ENCODE measurements at regions of chr22 and their contacts with region 1.

Region 1: DNA sequence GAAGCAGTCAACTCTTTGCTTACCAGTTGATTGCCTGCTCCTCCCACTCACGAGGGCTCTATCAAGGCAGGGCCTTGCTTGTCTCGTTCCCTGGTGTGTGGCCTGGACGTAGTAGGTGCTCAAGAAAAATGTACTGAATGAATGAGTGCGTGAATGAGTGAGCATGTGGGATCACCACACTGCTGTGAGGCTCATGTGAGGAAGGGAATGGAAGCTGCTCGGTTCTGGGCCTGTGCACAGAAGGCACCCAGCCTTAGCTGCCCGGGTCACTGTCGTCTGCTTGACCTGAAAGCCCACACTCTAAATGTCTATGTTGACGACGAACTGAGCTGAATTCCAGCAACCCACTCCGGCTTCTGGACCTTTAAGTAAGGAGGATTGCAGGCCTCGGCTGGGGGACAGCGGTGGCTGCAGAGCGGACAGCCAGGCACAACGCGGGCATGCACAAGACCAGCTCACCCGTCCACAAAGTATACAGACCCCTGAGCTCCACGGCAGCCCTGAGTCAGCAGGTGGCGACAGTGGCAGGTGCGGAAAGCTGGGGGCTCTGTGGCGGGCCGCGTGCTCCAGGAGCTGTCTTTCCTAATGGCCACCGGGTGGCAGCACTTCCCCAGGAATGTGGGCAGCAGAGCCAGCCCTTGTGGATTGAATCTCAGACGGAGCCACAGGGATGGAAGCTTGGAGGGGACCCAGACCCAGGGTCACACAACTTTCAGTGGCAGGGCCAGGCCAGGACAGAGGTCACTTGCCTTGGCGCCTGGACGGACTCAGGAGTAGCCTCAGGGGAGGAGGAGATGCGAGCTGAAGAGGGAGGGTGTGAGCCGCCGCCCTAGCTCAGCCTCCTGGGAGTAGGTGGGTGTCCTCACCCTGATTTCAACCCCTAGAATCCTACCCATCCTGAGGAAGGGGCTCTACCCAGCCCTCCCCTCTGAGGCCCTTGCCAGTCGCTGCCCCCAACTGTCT is 5.0 kb upstream of the PICK1 start:
- DNase-seq: peak; percentile 59 to 90 (median 70)
- ATAC-seq: peak; percentile 74
- H3K4me3 ChIP-seq: no peak overlapping the region
- H3K4me3 Mint-ChIP-seq: no peak overlapping the region
- H3K27ac ChIP-seq: no peak overlapping the region
- H3K27ac Mint-ChIP-seq: no peak overlapping the region
- H3K4me1 ChIP-seq: peaks cover 21% of the 10 kb centered on the region
- H3K4me1 Mint-ChIP-seq: peaks cover 7% of the 10 kb centered on the region
- H3K27me3 ChIP-seq: no peaks in the 10 kb centered on the region
- H3K27me3 Mint-ChIP-seq: peaks cover 12% of the 10 kb centered on the region
- CTCF ChIP-seq: peak; percentile 78

Region 2: GRCh38 chr22:37849089-37849751 is 203.0 kb before region 1 on chr22 and contains the start of gene EIF3L:
- CTCF ChIA-PET with region 1: no interaction called
- POLR2A ChIA-PET with region 1: no interaction called
- intact Hi-C with region 1: loop called in 1 of 2 experiments (anchors 10 kb)
- DNase-seq: peak; percentile 77 to 92 (median 84)
- ATAC-seq: peak; percentile 63
- H3K4me3 ChIP-seq: peak within 1 kb of the TSS; percentile 83
- H3K4me3 Mint-ChIP-seq: peak within 1 kb of the TSS; percentile 90
- H3K27ac ChIP-seq: peak within 1 kb of the TSS; percentile 78 to 89
- H3K27ac Mint-ChIP-seq: peak within 1 kb of the TSS; percentile 97
- H3K4me1 ChIP-seq: peaks cover 31% of the 10 kb centered on the region
- H3K4me1 Mint-ChIP-seq: peaks cover 51% of the 10 kb centered on the region
- H3K27me3 ChIP-seq: no peaks in the 10 kb centered on the region
- H3K27me3 Mint-ChIP-seq: no peaks in the 10 kb centered on the region
- CTCF ChIP-seq: no peak
- total RNA-seq, gene EIF3L: 525 to 541 TPM

Region 3: DNA sequence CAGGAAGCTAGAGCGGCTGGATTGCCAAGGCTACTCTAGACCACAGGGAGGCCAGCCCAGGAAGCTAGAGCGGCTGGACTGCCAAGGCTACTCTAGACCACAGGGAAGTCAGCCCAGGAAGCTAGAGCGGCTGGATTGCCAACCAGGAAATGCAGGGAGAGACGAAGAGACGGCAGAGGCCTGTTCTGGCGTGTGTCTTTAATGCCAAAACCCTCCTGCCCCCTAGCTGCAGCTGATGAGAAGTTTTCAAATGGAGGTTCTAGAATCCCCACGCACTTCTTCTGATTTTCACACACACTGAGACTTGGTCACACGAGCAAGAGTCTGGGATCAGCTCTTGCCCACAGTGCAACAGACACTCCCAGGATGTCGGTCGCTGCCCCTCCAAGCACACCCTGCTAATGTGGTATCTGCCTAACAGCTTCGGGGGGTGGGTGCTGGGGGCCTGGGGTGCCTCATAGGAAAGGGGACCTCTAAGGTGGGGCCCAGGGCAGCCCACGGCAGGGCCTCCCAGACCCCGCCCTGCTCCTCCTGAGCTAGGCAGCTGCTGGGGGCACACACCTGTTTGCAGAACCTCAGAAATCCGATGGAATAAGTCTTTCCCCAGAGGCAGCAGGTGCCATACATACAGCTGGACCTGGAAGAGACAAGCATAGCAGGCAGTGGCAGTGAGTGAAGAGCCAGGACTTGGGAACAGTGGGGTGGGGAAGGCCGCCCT is 178.1 kb after region 1 on chr22:
- CTCF ChIA-PET with region 1: interaction called, 9 read pairs
- POLR2A ChIA-PET with region 1: interaction called, 3 read pairs
- intact Hi-C with region 1: loop called (anchors 1 to 2 kb)
- DNase-seq: peak in 12 of 14 experiments; percentile 13 to 70 (median 30)
- ATAC-seq: peak; percentile 45
- H3K4me3 ChIP-seq: no peak overlapping the region
- H3K4me3 Mint-ChIP-seq: no peak overlapping the region
- H3K27ac ChIP-seq: no peak overlapping the region
- H3K27ac Mint-ChIP-seq: peak overlapping the region; percentile 30
- H3K4me1 ChIP-seq: peaks cover 26% of the 10 kb centered on the region
- H3K4me1 Mint-ChIP-seq: peaks cover 5% of the 10 kb centered on the region
- H3K27me3 ChIP-seq: no peaks in the 10 kb centered on the region
- H3K27me3 Mint-ChIP-seq: no peaks in the 10 kb centered on the region
- CTCF ChIP-seq: peak; percentile 15

Region 4: DNA sequence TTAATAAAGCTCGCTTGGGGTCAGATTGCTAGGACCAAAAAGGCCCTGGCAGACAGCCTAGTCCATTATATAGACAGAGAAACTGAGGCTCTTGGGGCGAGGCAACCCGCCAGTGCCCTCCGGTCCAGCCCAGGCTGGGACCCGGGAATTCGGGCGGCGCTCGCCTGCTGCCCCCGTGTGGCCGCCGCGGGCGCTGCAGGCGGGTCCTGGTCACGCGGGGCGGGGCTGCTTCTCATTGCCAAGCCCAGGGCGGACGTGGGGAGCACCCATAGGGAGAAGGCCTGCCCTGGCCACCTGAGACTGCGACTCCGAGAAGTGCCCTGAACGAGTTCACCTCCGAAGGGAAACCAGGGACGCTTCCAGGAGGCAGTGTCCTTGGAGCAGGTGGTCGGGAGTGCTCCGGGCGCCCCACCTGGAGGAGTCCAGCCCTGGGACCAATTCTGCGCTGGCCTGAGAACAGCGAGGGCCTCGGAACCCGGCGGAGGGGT is 301.0 kb after region 1 on chr22:
- CTCF ChIA-PET with region 1: interaction called, 4 read pairs
- POLR2A ChIA-PET with region 1: no interaction called
- intact Hi-C with region 1: loop called (anchors 1 kb)
- DNase-seq: peak; percentile 38 to 81 (median 64)
- ATAC-seq: peak; percentile 94
- H3K4me3 ChIP-seq: no peak overlapping the region
- H3K4me3 Mint-ChIP-seq: no peak overlapping the region
- H3K27ac ChIP-seq: no peak overlapping the region
- H3K27ac Mint-ChIP-seq: no peak overlapping the region
- H3K4me1 ChIP-seq: peaks cover 7% of the 10 kb centered on the region
- H3K4me1 Mint-ChIP-seq: no peaks in the 10 kb centered on the region
- H3K27me3 ChIP-seq: no peaks in the 10 kb centered on the region
- H3K27me3 Mint-ChIP-seq: no peaks in the 10 kb centered on the region
- CTCF ChIP-seq: peak; percentile 99

Region 5: GRCh38 chr22:38513063-38513462 is 460.9 kb after region 1 on chr22:
- CTCF ChIA-PET with region 1: interaction called, 3 read pairs
- POLR2A ChIA-PET with region 1: no interaction called
- intact Hi-C with region 1: loop called (anchors 5 kb)
- DNase-seq: peak in 13 of 14 experiments; percentile 5 to 70 (median 46)
- ATAC-seq: peak; percentile 99
- H3K4me3 ChIP-seq: no peak overlapping the region
- H3K4me3 Mint-ChIP-seq: no peak overlapping the region
- H3K27ac ChIP-seq: no peak overlapping the region
- H3K27ac Mint-ChIP-seq: no peak overlapping the region
- H3K4me1 ChIP-seq: peaks cover 3% of the 10 kb centered on the region
- H3K4me1 Mint-ChIP-seq: peaks cover 9% of the 10 kb centered on the region
- H3K27me3 ChIP-seq: no peaks in the 10 kb centered on the region
- H3K27me3 Mint-ChIP-seq: no peaks in the 10 kb centered on the region
- CTCF ChIP-seq: peak; percentile 38

Region 6: DNA sequence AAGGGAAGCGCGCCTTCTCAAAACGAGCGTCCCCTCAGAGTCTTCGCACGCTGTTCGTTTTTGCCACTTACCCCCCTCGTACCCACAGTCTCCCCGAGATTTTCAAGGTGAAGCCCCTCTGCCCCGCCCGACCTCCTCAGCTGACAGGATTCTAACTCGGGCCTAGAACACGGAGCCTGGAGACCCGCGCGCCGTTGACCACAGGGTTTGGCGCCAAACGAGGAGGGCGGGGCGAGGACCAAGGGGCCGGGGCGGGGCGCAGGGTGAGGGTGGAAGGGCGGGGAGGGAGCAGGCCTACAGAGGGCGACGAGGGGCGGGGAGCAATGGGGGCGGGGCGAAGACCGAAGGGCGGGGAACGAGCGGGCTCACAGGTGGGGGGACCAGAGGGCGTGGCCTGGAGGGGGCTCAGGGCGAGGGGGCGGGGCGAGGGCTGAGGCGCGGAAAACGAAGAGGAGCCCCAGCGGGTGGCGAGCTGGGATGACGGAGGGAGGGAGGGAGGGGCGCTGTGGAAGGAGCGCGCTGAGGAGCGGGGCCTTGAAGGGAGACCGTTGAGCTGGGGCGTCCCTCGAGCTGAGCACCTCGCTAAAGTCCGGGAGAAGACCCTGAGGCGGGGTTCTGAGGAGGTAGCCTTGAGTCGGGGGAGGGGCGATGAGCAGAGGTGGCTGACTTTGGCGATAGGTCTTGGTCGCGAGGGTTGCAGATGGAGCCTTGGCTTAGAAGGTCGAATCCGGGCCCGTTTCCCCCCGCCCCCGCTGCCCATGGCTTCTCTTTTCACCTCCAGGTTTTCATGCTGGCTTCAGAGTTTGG is 518.0 kb after region 1 on chr22 and contains the start of gene DMC1:
- CTCF ChIA-PET with region 1: interaction called, 4 read pairs
- POLR2A ChIA-PET with region 1: no interaction called
- intact Hi-C with region 1: loop called (anchors 2 kb)
- DNase-seq: peak; percentile 93 to 100 (median 97)
- ATAC-seq: peak; percentile 92
- H3K4me3 ChIP-seq: peak within 1 kb of the TSS; percentile 89
- H3K4me3 Mint-ChIP-seq: peak within 1 kb of the TSS; percentile 90
- H3K27ac ChIP-seq: peak within 1 kb of the TSS in 1 of 2 donors; percentile 44
- H3K27ac Mint-ChIP-seq: peak within 1 kb of the TSS; percentile 80
- H3K4me1 ChIP-seq: peaks cover 20% of the 10 kb centered on the region
- H3K4me1 Mint-ChIP-seq: peaks cover 17% of the 10 kb centered on the region
- H3K27me3 ChIP-seq: no peaks in the 10 kb centered on the region
- H3K27me3 Mint-ChIP-seq: no peaks in the 10 kb centered on the region
- CTCF ChIP-seq: no peak
- total RNA-seq, gene DMC1: 0.52 to 0.95 TPM

Measured in CD4-positive, alpha-beta T cell (primary cell).